ENCODE measurements at regions of chr11 and their contacts with region 1.

Region 1: DNA sequence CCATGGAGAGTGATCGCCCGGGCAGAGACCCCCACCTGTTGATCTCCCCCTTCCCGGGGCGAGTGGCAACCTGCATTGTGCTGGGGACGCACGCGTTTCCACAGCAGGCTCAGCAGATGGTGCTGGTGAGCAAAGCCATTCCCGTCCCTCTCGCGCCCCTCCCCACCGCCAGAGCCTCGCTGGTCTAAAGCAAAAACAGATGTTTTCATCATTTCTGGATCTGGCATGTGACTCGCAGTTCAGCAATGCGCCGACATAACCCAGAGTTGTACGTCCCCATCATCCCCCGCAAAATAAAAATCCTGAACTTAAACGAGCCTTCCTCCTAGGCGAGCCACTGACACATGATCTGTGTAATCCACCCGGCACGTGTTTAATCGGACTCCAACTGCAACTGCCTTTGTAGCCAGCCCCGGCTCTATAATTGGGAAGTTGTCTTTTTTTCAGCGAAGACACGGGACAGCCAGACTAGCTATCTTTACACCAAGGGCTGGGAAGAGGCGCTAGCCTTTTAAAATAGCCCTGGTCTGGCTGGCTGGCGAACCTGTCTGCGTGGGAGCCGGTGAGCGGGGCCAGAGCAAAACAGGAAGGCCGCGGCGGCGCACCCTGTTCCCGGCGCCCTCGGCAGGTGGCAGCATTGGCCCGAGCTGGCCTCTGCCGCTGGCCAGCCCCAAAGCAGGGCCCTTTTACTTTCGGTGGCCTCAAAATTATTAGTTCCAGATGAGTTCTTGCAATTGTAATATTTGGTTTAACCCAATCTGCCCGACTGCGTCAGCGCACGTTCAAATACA is 203.0 kb upstream of the SORL1-AS1 start:
- DNase-seq: peak; percentile 82
- H3K4me3 Mint-ChIP-seq: peak overlapping the region; percentile 69
- H3K27ac Mint-ChIP-seq: peak overlapping the region; percentile 92
- H3K4me1 Mint-ChIP-seq: peaks cover 24% of the 10 kb centered on the region
- H3K27me3 Mint-ChIP-seq: no peaks in the 10 kb centered on the region
- CTCF ChIP-seq: peak; percentile 92

Region 2: GRCh38 chr11:121318848-121319834 is 336.6 kb before region 1 on chr11:
- CTCF ChIA-PET with region 1: interaction called, 4 read pairs
- POLR2A ChIA-PET with region 1: no interaction called
- intact Hi-C with region 1: loop called (anchors 1 kb)
- DNase-seq: peak; percentile 57
- H3K4me3 Mint-ChIP-seq: no peak overlapping the region
- H3K27ac Mint-ChIP-seq: no peak overlapping the region
- H3K4me1 Mint-ChIP-seq: peaks cover 6% of the 10 kb centered on the region
- H3K27me3 Mint-ChIP-seq: peaks cover 18% of the 10 kb centered on the region
- CTCF ChIP-seq: peak; percentile 68

Region 3: DNA sequence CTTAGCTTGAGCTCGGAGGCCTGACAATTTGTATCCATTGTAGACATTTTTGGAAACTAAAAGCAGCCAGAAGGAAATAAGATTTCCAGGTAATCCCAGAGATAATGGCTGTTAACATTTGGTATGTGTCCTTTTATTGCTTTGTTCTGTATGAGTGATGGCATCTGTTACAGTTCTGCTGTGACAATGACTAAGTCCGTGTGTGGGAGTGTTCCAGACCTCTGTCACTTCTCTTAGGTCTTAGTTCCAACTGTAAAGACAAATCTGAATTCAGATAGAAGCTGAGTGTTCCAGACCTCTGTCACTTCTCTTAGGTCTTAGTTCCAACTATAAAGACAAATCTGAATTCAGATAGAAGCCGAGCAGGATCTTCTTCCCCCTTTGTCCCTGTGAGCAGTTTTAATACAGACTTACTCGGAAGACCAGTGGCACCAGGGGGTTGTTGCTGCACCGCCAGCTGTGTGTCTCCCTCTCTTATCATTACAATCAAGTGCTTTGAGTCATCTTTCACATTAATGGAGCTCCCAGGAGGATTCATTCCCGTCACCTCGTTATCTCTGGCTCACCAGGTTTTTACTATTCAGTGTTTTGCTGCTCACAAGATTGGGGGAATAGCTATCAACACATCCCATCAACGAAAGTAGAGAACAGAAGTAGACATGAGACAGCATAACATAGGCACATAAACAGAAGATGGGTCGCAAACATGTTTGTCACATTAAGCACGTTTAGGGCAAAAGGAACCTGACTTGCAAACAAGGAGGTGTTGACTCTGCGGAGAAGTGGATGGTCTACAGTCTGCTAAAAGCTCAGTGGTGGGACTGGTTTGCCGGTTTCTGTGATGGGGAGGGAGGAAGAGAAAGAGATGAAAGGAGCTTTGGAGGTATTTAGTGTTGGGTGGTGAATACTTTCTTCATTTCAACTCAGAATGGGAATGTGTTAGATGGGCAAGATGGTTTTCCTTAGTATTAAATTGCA is 11.9 kb before region 1 on chr11:
- CTCF ChIA-PET with region 1: interaction called, 28 read pairs
- POLR2A ChIA-PET with region 1: no interaction called
- intact Hi-C with region 1: no loop called
- DNase-seq: no peak
- H3K4me3 Mint-ChIP-seq: no peak overlapping the region
- H3K27ac Mint-ChIP-seq: no peak overlapping the region
- H3K4me1 Mint-ChIP-seq: no peaks in the 10 kb centered on the region
- H3K27me3 Mint-ChIP-seq: no peaks in the 10 kb centered on the region
- CTCF ChIP-seq: no peak

Region 4: GRCh38 chr11:121711236-121711635 is 55.5 kb after region 1 on chr11:
- CTCF ChIA-PET with region 1: no interaction called
- POLR2A ChIA-PET with region 1: no interaction called
- intact Hi-C with region 1: no loop called
- DNase-seq: no peak
- H3K4me3 Mint-ChIP-seq: no peak overlapping the region
- H3K27ac Mint-ChIP-seq: no peak overlapping the region
- H3K4me1 Mint-ChIP-seq: no peaks in the 10 kb centered on the region
- H3K27me3 Mint-ChIP-seq: no peaks in the 10 kb centered on the region
- CTCF ChIP-seq: no peak

Region 5: DNA sequence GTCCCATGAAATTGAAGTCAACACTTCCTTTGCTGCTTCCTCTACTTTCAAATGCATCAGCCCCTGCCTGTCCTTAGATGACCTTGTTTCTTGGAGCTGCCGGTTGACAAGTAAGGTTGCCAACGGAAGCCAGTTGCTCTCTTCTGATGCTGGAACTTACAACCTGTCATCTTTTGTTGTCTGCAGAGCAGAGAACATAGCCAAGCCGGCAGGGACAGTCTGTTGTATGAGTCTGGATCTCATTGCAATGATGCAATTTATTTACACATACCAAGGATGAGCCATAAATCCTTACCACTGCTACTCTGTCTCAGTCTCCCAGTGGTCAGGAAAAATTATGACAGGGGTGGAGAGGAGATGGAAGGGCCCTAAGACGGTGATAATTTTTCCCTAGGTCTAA is 308.9 kb after region 1 on chr11:
- CTCF ChIA-PET with region 1: no interaction called
- POLR2A ChIA-PET with region 1: no interaction called
- intact Hi-C with region 1: no loop called
- DNase-seq: peak; percentile 54
- H3K4me3 Mint-ChIP-seq: no peak overlapping the region
- H3K27ac Mint-ChIP-seq: peak overlapping the region; percentile 47
- H3K4me1 Mint-ChIP-seq: peaks cover 16% of the 10 kb centered on the region
- H3K27me3 Mint-ChIP-seq: no peaks in the 10 kb centered on the region
- CTCF ChIP-seq: no peak

Region 6: DNA sequence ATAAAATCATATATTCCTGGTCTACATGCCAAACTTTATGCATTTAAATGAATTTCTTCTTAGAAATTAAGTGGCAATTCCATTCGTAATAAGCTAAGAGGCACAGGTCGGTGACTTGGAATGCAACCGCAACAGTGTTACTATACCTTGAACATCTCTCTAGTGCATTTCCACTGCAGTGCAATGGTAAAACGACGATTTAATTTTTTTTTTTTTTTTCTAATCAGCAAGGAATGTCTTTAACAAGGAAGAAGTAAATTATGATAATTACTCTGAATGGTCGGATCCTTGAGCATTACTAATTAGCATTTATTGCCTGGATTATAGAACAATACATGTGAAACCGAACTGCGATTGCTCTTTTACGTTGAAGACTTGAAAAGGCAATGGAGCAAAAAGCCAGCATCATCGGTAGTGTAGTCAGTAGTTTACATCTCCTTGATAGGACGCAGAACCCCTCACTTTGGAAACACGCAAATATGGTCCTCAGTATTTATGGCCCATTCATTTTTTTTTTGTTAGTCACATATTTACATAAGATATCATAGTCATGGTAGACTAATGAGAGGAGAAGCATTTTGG is 440.0 kb after region 1 on chr11:
- CTCF ChIA-PET with region 1: interaction called, 82 read pairs
- POLR2A ChIA-PET with region 1: interaction called, 41 read pairs
- intact Hi-C with region 1: loop called (anchors 1 kb)
- DNase-seq: no peak
- H3K4me3 Mint-ChIP-seq: no peak overlapping the region
- H3K27ac Mint-ChIP-seq: no peak overlapping the region
- H3K4me1 Mint-ChIP-seq: peaks cover 31% of the 10 kb centered on the region
- H3K27me3 Mint-ChIP-seq: no peaks in the 10 kb centered on the region
- CTCF ChIP-seq: no peak

Region 7: GRCh38 chr11:122197055-122197987 is 541.6 kb after region 1 on chr11:
- CTCF ChIA-PET with region 1: interaction called, 83 read pairs
- POLR2A ChIA-PET with region 1: interaction called, 14 read pairs
- intact Hi-C with region 1: no loop called
- DNase-seq: peak; percentile 98
- H3K4me3 Mint-ChIP-seq: peak overlapping the region; percentile 12
- H3K27ac Mint-ChIP-seq: peak overlapping the region; percentile 49
- H3K4me1 Mint-ChIP-seq: peaks cover 46% of the 10 kb centered on the region
- H3K27me3 Mint-ChIP-seq: no peaks in the 10 kb centered on the region
- CTCF ChIP-seq: no peak

Region 8: GRCh38 chr11:122505304-122506006 is 849.7 kb after region 1 on chr11:
- CTCF ChIA-PET with region 1: interaction called, 106 read pairs
- POLR2A ChIA-PET with region 1: interaction called, 8 read pairs
- intact Hi-C with region 1: loop called (anchors 1 kb)
- DNase-seq: peak; percentile 81
- H3K4me3 Mint-ChIP-seq: no peak overlapping the region
- H3K27ac Mint-ChIP-seq: no peak overlapping the region
- H3K4me1 Mint-ChIP-seq: peaks cover 6% of the 10 kb centered on the region
- H3K27me3 Mint-ChIP-seq: peaks cover 25% of the 10 kb centered on the region
- CTCF ChIP-seq: peak; percentile 93